ENCODE measurements at regions of chr7 and their contacts with region 1.

Region 1: GRCh38 chr7:128387216-128388144 is 22.3 kb downstream of the IMPDH1 start:
- DNase-seq: peak; percentile 42
- ATAC-seq: peak; percentile 82
- H3K4me3 ChIP-seq: no peak overlapping the region
- H3K27ac ChIP-seq: no peak overlapping the region
- H3K4me1 ChIP-seq: 0 out of 2 replicates have a peak, but pooled peaks cover 5% of the 10 kb centered on the region
- H3K27me3 ChIP-seq: no peaks in the 10 kb centered on the region
- CTCF ChIP-seq: peak; percentile 92

Region 2: GRCh38 chr7:128347647-128348097 is 39.8 kb before region 1 on chr7:
- CTCF ChIA-PET with region 1: interaction called, 66 read pairs
- POLR2A ChIA-PET with region 1: no interaction called
- in situ Hi-C with region 1: no loop called
- intact Hi-C with region 1: loop called (anchors 1 kb)
- DNase-seq: no peak
- ATAC-seq: peak; percentile 64
- H3K4me3 ChIP-seq: no peak overlapping the region
- H3K27ac ChIP-seq: no peak overlapping the region
- H3K4me1 ChIP-seq: peaks cover 3% of the 10 kb centered on the region; the same call in 1 of the 2 replicates
- H3K27me3 ChIP-seq: no peaks in the 10 kb centered on the region
- CTCF ChIP-seq: peak; percentile 92

Region 3: DNA sequence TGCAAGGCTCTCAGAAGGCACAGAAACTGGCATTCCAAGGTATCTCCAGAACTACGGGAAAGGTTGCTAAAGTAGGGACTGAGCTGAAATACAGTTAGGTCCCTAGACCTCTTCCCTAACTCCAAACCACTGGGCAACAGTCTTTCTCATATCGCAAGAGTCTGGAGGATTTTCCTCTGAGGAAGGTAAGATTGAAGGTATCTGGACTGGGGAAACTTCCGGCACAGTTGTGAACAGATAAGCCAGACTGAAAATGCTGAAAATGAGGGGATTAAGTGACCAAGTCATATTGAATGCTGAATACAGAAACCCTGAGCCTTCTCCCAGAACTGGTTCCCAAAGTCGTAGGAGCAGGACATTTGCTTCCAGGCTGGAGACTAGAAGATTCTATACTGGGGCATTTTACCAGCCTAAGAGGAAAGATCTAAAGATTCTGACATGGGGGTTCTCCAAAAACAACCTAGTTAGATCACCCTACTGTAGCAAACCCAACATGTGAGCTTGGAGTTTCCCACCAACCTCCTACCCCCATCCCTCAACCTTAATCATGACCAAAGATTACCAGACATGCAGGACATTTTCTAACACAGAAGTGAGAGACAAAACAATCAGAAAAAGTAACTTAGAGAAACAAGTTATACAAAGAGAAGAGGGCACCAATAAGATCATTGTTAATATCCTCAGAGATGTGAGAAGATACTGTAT is 23.2 kb before region 1 on chr7:
- CTCF ChIA-PET with region 1: interaction called, 4 read pairs
- POLR2A ChIA-PET with region 1: interaction called, 23 read pairs
- in situ Hi-C with region 1: no loop called
- intact Hi-C with region 1: no loop called
- DNase-seq: no peak
- ATAC-seq: no peak
- H3K4me3 ChIP-seq: no peak overlapping the region
- H3K27ac ChIP-seq: no peak overlapping the region
- H3K4me1 ChIP-seq: no peaks in the 10 kb centered on the region; the same call in 1 of the 2 replicates
- H3K27me3 ChIP-seq: peaks cover 24% of the 10 kb centered on the region
- CTCF ChIP-seq: no peak

Region 4: DNA sequence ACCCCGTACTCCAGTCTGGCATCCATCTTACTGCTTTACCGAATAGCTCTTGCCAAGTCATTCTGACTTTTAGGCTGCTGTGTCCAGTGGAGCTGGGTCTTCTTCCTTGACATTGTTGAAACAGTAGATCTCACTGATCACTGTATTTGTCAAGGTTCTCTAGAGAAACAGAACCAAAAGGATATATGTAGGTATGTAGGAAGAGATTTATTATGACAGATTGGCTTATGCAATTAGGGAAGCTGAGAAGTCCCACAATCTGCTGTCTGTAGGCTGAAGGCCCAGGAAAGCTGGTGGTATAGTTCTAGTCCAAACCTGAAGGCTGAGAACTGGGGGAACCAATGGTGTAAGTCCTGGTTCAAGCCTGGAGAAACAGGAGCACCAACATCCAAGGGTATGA is 13.9 kb before region 1 on chr7:
- CTCF ChIA-PET with region 1: interaction called, 6 read pairs
- POLR2A ChIA-PET with region 1: interaction called, 12 read pairs
- in situ Hi-C with region 1: no loop called
- intact Hi-C with region 1: no loop called
- DNase-seq: no peak
- ATAC-seq: no peak
- H3K4me3 ChIP-seq: no peak overlapping the region
- H3K27ac ChIP-seq: no peak overlapping the region
- H3K4me1 ChIP-seq: no peaks in the 10 kb centered on the region
- H3K27me3 ChIP-seq: no peaks in the 10 kb centered on the region
- CTCF ChIP-seq: no peak

Measured in Panc1 (cell line).